ENCODE measurements at regions of chr6 and their contacts with region 1.

Region 1: DNA sequence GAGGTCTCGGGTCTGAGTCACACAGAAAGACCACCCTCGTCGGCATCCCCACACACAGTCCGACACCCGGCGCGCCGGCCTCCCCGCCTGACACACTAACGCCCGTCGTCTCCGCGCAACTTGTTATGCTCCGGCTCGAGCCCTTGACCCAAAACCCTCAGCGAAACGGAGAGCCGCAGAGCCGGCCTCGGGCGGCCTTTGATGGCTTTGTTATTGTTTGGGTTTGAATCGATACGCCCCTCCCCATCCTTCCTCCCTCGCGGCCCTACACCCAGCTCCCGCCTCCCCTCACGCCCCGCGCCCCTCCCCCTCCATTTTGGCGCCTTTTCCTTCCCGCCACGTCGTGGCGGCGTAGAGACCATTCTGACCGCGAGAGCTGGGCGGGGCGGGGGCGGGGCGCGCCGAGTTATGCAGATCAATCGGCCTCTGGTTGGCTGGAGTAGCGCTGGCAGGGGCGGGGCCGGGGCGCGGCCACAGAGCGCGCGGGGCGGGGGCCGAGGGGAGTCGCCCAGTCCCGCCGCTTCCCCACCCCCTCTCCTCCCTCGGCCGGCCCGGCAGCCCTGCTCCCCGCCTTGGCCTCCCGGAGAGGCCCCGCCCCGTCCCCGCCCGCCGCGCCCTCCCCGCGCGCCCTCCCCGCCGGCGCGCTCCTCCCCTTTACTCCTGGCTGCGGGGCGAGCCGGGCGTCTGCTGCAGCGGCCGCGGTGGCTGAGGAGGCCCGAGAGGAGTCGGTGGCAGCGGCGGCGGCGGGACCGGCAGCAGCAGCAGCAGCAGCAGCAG is at the start of gene PIM1:
- DNase-seq: peak; percentile 99 to 100
- H3K4me3 ChIP-seq: peak within 1 kb of the TSS; percentile 73 to 85
- H3K27ac ChIP-seq: peak within 1 kb of the TSS; percentile 96 to 98
- H3K4me1 ChIP-seq: no peaks in the 10 kb centered on the region
- H3K27me3 ChIP-seq: no peaks in the 10 kb centered on the region
- CTCF ChIP-seq: peak in 2 of 4 experiments; percentile 13 to 14
- POLR2A ChIP-seq: peak; percentile 83 to 97
- total RNA-seq, gene PIM1: 2.0 to 44.5 (median 28.8) TPM

Region 2: DNA sequence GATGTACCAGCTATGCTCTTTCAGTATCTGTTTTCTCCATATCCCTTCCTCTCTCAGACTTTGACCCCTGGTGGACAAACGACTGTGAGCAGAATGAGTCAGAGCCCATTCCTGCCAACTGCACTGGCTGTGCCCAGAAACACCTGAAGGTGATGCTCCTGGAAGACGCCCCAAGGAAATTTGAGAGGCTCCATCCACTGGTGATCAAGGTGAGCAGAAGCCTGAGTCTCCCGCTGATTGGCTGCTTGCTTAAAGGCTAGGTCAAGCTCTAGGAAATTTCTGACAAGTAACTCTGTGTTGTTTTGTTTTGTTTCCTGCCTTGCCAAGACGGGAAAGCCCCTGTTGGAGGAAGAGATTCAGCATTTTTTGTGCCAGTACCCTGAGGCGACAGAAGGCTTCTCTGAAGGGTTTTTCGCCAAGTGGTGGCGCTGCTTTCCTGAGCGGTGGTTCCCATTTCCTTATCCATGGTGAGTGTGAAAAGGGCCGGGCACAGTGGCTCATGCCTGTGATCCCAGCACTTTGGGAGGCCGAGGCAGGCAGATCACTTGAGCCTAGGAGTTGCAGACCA is 255.4 kb before region 1 on chr6:
- intact Hi-C with region 1: no loop called
- DNase-seq: no peak
- H3K4me3 ChIP-seq: no peak overlapping the region
- H3K27ac ChIP-seq: no peak overlapping the region
- H3K4me1 ChIP-seq: peaks cover 7 to 13% of the 10 kb centered on the region in 2 donors
- H3K27me3 ChIP-seq: no peaks in the 10 kb centered on the region
- CTCF ChIP-seq: no peak
- POLR2A ChIP-seq: no peak

Region 3: GRCh38 chr6:37029249-37029971 is 140.3 kb before region 1 on chr6:
- intact Hi-C with region 1: loop called (anchors 10 kb)
- DNase-seq: peak; percentile 69 to 74
- H3K4me3 ChIP-seq: no peak overlapping the region
- H3K27ac ChIP-seq: no peak overlapping the region
- H3K4me1 ChIP-seq: no peaks in the 10 kb centered on the region
- H3K27me3 ChIP-seq: no peaks in the 10 kb centered on the region
- CTCF ChIP-seq: peak; percentile 66 to 85 (median 76)
- POLR2A ChIP-seq: no peak

Region 4: DNA sequence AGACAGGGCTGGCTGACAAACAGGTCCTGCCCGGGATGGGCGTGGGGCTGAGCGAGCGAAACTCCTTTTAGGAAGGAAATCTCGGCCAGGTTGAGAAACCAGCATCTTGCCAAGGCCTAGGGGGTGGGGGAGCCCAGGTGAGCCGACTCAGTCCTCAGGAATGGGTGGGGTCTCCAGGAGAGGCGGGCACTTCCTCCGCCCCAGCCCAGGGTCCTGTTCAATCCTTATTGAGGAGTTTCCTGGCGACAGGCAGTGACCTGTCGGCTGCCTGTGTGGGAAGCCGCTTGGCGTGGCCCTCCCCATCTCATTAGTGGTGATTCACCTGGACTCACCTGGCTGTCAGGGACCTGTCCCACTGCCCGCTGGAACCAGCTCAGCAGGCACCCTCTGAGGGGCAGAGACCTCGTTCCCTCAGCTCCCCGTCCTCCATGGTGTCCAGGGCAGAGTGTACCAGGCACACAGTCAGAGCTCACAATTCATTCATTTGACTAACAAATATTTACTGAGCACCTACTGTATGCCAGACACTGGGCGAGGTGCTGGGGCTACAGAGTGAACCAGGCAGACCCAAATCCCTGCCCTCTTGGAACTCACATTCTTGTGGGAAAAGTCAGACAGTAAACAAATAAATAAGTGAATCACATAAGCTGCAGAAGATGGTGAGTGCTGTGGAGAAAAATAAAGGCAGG is 113.1 kb before region 1 on chr6:
- intact Hi-C with region 1: loop called (anchors 2 kb)
- DNase-seq: no peak
- H3K4me3 ChIP-seq: no peak overlapping the region
- H3K27ac ChIP-seq: no peak overlapping the region
- H3K4me1 ChIP-seq: no peaks in the 10 kb centered on the region
- H3K27me3 ChIP-seq: no peaks in the 10 kb centered on the region
- CTCF ChIP-seq: no peak
- POLR2A ChIP-seq: no peak

Region 5: DNA sequence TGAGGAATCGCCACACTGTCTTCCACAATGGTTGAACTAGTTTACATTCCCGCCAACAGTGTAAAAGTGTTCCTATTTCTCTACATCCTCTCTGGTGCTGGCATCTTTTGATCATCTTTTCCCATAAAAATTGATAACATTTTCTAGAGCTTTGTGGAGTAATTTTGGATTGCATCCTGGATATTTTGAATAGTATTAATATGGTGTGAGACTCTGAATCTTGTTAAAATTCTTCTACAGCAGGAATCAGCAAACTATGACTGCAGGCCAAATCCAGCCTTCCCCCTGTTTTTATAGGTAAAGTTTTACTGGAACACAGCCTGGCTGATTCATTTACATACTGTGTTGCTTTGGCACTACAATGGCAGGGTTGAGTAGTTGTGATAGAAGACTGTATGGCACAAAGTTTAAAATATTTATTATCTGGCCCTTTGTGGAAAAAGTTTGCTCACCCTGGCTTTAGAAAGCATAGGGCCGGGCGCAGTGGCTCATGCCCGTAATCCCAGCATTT is 169.1 kb after region 1 on chr6:
- intact Hi-C with region 1: no loop called
- DNase-seq: no peak
- H3K4me3 ChIP-seq: no peak overlapping the region
- H3K27ac ChIP-seq: no peak overlapping the region
- H3K4me1 ChIP-seq: no peaks in the 10 kb centered on the region
- H3K27me3 ChIP-seq: no peaks in the 10 kb centered on the region
- CTCF ChIP-seq: no peak
- POLR2A ChIP-seq: no peak